Thyroid gland (tissue), 4 donors: ENCODE measurements at regions of chr15 and their contacts with region 1.

Region 1: GRCh38 chr15:90320061-90320884 is 31.8 kb upstream of the ZNF774 start:
- DNase-seq: peak; percentile 86
- H3K4me3 ChIP-seq: no peak overlapping the region
- H3K27ac ChIP-seq: peak overlapping the region in 2 of 3 donors; percentile 30 to 33
- H3K4me1 ChIP-seq: peaks cover 13 to 18% of the 10 kb centered on the region in 2 donors
- H3K27me3 ChIP-seq: no peaks in the 10 kb centered on the region
- CTCF ChIP-seq: peak; percentile 96 to 100 (median 98)
- POLR2A ChIP-seq: no peak

Region 2: DNA sequence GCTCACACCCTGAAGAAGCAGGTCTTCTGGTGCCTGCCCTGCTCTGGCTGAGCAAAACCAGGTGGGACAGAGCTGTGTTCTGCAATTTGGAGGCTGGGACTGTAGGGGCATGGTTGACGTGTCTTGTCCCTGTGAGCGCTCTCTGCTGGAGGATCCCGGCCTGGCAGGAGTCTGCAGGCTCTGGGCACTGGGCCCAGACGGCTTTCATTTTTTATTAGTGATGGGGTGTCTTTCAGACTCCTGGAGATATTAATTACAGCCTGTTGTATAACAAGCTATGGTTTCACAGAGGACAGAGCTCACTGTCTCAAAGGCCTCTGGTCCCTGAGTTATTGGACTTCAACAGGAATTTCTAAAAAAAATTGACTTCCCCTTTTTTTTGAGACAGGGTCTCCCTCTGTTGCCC is 348.7 kb before region 1 on chr15:
- intact Hi-C with region 1: no loop called
- DNase-seq: peak; percentile 48 to 59
- H3K4me3 ChIP-seq: no peak overlapping the region
- H3K27ac ChIP-seq: no peak overlapping the region
- H3K4me1 ChIP-seq: peaks cover 4 to 12% of the 10 kb centered on the region in 2 donors
- H3K27me3 ChIP-seq: no peaks in the 10 kb centered on the region
- CTCF ChIP-seq: peak in 4 of 6 experiments; percentile 14 to 53 (median 40)
- POLR2A ChIP-seq: no peak

Region 3: DNA sequence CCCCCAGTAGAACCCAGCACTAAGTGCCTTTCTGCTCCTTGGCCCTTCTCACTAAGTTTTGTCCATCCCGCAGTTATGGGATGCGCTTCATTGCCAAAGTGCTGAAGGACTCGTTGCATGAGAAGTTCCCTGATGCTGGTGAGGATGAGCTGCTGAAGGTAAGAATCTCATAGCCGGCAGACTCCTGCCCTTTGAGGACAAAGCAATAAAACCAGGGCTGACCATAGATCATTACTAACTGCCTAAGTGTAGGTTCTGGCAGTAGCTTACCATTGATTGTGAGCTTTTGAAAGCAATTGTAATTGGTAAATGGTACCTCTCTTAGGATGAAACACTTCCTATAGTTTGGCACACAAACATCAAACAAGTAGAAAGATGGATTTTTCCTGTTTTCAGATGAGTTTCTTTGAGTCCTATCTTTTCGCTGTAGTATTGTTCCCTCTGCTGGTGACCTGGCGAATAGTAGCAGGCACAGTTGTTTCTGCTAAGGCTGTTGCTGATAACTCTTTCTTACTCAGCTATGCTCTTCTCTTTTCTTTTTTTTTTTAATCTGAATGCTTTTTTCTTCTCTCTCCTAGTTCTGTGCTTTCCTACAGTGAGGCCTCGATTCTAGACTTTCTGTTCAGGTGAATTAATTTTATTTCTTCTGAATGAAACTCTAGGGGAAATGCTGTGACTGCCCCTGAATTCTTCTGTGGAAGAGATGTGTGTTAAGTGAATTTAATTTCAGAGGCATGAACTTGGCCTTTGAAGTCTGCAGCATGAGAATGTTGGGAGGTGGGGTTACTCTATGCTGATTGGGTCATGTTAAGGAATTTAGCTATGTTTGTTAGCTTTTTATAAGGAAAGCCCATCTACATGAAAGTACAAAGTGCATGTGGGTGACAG is 162.1 kb after region 1 on chr15:
- intact Hi-C with region 1: loop called (anchors 5 kb)
- DNase-seq: peak; percentile 39 to 59
- H3K4me3 ChIP-seq: no peak overlapping the region
- H3K27ac ChIP-seq: peak overlapping the region in 1 of 3 donors; percentile 5
- H3K4me1 ChIP-seq: peaks cover 5 to 18% of the 10 kb centered on the region in 2 donors
- H3K27me3 ChIP-seq: no peaks in the 10 kb centered on the region
- CTCF ChIP-seq: peak; percentile 31 to 96 (median 71)
- POLR2A ChIP-seq: no peak